ENCODE measurements at regions of chr6 and their contacts with region 1.

Region 1: GRCh38 chr6:1263039-1263849 is 48.7 kb upstream of the FOXQ1 start:
- DNase-seq: peak; percentile 99
- ATAC-seq: peak; percentile 57
- H3K4me3 ChIP-seq: peak overlapping the region; percentile 14 to 53 (median 14); a peak in 5 of 6 replicates
- H3K27ac ChIP-seq: peak overlapping the region; percentile 95
- H3K4me1 ChIP-seq: peaks cover 67% of the 10 kb centered on the region
- H3K27me3 ChIP-seq: no peaks in the 10 kb centered on the region
- CTCF ChIP-seq: peak; percentile 86
- EP300 ChIP-seq: peak in 1 of 2 experiments; percentile 91; a peak in 3 of 4 replicates
- POLR2A ChIP-seq: peak in 1 of 2 experiments; percentile 43; a peak in 2 of 4 replicates
- RAD21 ChIP-seq: peak; percentile 87

Region 2: DNA sequence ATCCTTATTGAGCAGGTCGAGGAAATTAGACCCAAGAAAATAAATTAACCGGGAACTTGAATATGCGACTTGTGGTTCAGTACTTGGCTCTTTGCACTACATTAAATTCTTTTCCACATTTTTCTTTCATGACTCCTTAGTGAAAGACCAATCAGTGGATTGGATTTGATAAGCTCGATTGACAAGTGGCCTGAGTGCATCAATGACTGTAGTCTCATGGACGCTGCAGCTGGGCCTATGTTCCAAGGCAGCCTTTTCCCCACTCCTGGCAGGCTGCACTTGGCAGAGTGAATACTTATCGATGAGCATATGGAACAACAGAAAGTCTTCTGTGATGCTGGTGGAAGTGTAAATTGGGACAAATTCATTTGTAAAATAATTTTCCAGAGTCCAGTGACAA is 359.5 kb before region 1 on chr6:
- CTCF ChIA-PET with region 1: no interaction called
- POLR2A ChIA-PET with region 1: interaction called, 23 read pairs
- in situ Hi-C with region 1: no loop called
- intact Hi-C with region 1: no loop called
- DNase-seq: no peak
- ATAC-seq: no peak
- H3K4me3 ChIP-seq: no peak overlapping the region
- H3K27ac ChIP-seq: no peak overlapping the region
- H3K4me1 ChIP-seq: peaks cover 30% of the 10 kb centered on the region
- H3K27me3 ChIP-seq: peaks cover 2 to 15% of the 10 kb centered on the region in 2 experiments; a peak in 2 of 5 replicates
- CTCF ChIP-seq: no peak
- EP300 ChIP-seq: no peak
- POLR2A ChIP-seq: no peak
- RAD21 ChIP-seq: no peak

Region 3: GRCh38 chr6:1179571-1180459 is 83.4 kb before region 1 on chr6:
- CTCF ChIA-PET with region 1: no interaction called
- POLR2A ChIA-PET with region 1: interaction called, 26 read pairs
- in situ Hi-C with region 1: no loop called
- intact Hi-C with region 1: no loop called
- DNase-seq: no peak
- ATAC-seq: no peak
- H3K4me3 ChIP-seq: no peak overlapping the region
- H3K27ac ChIP-seq: no peak overlapping the region
- H3K4me1 ChIP-seq: peaks cover 56% of the 10 kb centered on the region
- H3K27me3 ChIP-seq: no peaks in the 10 kb centered on the region
- CTCF ChIP-seq: no peak
- EP300 ChIP-seq: no peak
- POLR2A ChIP-seq: no peak
- RAD21 ChIP-seq: no peak

Region 4: DNA sequence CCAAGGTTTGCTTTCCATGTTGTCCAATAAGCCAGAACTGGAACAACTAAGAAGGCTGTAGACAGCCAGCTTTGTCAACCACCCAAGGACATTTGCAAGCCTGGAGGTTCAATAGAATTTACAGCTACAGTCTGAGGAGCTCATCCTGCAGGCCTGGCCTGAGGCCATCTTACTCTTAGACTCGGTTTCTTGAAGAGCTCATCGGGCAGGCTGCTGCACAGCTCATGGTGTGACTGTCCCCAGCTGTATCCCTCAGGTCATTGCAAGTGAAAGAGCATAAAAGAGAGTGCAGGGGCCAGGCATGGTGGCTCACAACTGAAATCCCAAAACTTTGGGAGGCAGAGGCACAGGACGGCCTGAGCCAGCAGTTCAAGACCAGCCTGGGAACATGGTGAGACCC is 48.2 kb before region 1 on chr6:
- CTCF ChIA-PET with region 1: no interaction called
- POLR2A ChIA-PET with region 1: interaction called, 11 read pairs
- in situ Hi-C with region 1: no loop called
- intact Hi-C with region 1: no loop called
- DNase-seq: no peak
- ATAC-seq: peak; percentile 48; the same call in 2 of the 3 replicates
- H3K4me3 ChIP-seq: no peak overlapping the region
- H3K27ac ChIP-seq: no peak overlapping the region
- H3K4me1 ChIP-seq: peaks cover 49% of the 10 kb centered on the region
- H3K27me3 ChIP-seq: no peaks in the 10 kb centered on the region
- CTCF ChIP-seq: peak; percentile 31; the same call in 1 of the 2 replicates
- EP300 ChIP-seq: no peak
- POLR2A ChIP-seq: no peak
- RAD21 ChIP-seq: no peak

Region 5: DNA sequence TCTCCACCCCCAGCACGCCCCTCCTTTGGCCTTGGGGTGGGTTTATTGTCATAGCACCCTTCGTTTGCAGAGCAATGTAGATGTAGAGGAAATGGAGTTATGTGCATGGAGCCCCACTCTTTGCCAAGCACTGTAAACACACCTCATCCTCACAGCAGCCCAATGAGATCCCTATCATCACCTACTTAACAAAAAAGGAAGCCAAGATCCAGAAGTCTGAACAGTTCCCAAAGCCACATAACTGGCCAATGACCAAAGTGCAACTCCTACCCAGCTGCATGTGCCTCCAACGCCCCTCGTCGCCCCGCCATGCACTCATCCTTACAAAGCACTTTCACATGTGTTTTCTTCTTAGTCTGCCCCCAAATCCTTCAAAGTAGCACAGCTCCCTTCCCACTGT is 26.8 kb after region 1 on chr6:
- CTCF ChIA-PET with region 1: no interaction called
- POLR2A ChIA-PET with region 1: interaction called, 35 read pairs
- in situ Hi-C with region 1: no loop called
- intact Hi-C with region 1: no loop called
- DNase-seq: no peak
- ATAC-seq: no peak
- H3K4me3 ChIP-seq: no peak overlapping the region
- H3K27ac ChIP-seq: no peak overlapping the region
- H3K4me1 ChIP-seq: peaks cover 24% of the 10 kb centered on the region
- H3K27me3 ChIP-seq: no peaks in the 10 kb centered on the region
- CTCF ChIP-seq: no peak
- EP300 ChIP-seq: no peak
- POLR2A ChIP-seq: no peak
- RAD21 ChIP-seq: no peak

Region 6: DNA sequence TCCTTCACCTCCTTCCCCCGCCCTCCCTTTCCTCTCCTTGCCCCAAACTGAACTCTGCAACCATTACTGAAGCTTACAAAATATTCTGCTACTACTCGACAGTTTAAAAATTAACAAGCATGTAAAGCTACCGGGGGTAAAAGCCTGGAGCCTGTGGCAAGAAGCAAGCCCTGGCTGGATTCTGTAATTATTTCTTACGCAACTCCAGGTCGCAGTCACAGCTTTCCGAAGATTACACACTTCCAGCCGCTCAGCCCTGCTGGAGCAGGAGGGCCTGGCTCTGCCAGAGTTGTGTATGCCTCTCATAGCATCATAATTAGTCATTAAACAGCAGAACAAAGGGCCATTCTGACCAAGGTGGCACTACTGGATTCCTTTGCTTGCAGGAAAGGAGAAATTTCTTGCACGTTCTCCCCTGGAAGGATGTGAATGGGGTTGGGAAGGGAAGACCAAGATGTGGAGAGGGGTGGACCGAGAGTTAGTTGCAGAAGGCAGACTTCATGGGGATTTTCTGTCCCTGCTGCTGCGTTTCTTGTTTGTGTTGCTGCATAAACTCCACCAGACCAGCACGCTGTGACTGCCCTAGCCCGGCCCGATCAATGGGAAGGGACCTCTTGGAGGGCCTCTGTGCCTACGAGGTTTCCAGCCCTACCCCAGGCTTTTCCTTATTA is 72.3 kb after region 1 on chr6:
- CTCF ChIA-PET with region 1: interaction called, 11 read pairs
- POLR2A ChIA-PET with region 1: interaction called, 86 read pairs
- in situ Hi-C with region 1: no loop called
- intact Hi-C with region 1: loop called (anchors 1 kb)
- DNase-seq: peak; percentile 98
- ATAC-seq: peak; percentile 93
- H3K4me3 ChIP-seq: peak overlapping the region; percentile 20 to 65 (median 31)
- H3K27ac ChIP-seq: peak overlapping the region; percentile 73
- H3K4me1 ChIP-seq: peaks cover 48% of the 10 kb centered on the region
- H3K27me3 ChIP-seq: peaks cover 0 to 10% of the 10 kb centered on the region in 2 experiments; a peak in 1 of 5 replicates
- CTCF ChIP-seq: peak; percentile 41
- EP300 ChIP-seq: peak; percentile 89 to 93
- POLR2A ChIP-seq: peak in 1 of 2 experiments; percentile 52; a peak in 3 of 4 replicates
- RAD21 ChIP-seq: peak; percentile 52; the same call in 1 of the 2 replicates